MCF 10A (cell line): ENCODE measurements at regions of chrX and their contacts with region 1.

Region 1: GRCh38 chrX:9464435-9465371 is at the start of gene TBL1X:
- DNase-seq: no peak
- H3K4me3 Mint-ChIP-seq: peak within 1 kb of the TSS; percentile 57
- H3K27ac Mint-ChIP-seq: no peak within 1 kb of the TSS
- H3K4me1 Mint-ChIP-seq: peaks cover 14% of the 10 kb centered on the region
- H3K27me3 Mint-ChIP-seq: no peaks in the 10 kb centered on the region
- CTCF ChIP-seq: no peak
- total RNA-seq, gene TBL1X: 15.0 and 21.7 TPM in 2 replicates

Region 2: GRCh38 chrX:8971116-8971515 is 493.6 kb before region 1 on chrX:
- CTCF ChIA-PET with region 1: no interaction called
- POLR2A ChIA-PET with region 1: no interaction called
- intact Hi-C with region 1: loop called (anchors 2 kb)
- DNase-seq: peak; percentile 67
- H3K4me3 Mint-ChIP-seq: no peak overlapping the region
- H3K27ac Mint-ChIP-seq: no peak overlapping the region
- H3K4me1 Mint-ChIP-seq: no peaks in the 10 kb centered on the region
- H3K27me3 Mint-ChIP-seq: no peaks in the 10 kb centered on the region
- CTCF ChIP-seq: peak; percentile 31

Region 3: DNA sequence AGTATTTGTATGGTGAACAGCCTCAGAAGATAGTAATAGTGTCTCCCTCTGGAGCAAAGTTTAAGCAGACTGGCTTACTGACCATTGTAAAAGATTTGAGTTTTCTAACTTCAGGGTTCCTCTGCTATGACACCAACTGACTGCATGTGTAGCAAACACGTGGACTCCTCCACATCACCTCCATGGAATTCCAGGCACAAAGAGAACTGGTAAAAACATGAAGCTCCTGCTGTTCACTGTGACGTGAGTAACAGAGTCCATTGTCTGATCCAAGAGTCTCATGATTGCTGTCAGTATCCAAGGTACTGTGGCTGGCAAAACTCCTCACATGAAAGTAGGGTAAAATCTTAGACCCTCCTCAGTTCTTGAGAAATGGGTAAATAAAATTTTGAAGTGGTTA is 323.2 kb before region 1 on chrX:
- CTCF ChIA-PET with region 1: no interaction called
- POLR2A ChIA-PET with region 1: no interaction called
- intact Hi-C with region 1: no loop called
- DNase-seq: peak; percentile 21
- H3K4me3 Mint-ChIP-seq: no peak overlapping the region
- H3K27ac Mint-ChIP-seq: peak overlapping the region; percentile 23
- H3K4me1 Mint-ChIP-seq: peaks cover 13% of the 10 kb centered on the region
- H3K27me3 Mint-ChIP-seq: no peaks in the 10 kb centered on the region
- CTCF ChIP-seq: no peak

Region 4: GRCh38 chrX:9163214-9163681 is 301.5 kb before region 1 on chrX:
- CTCF ChIA-PET with region 1: no interaction called
- POLR2A ChIA-PET with region 1: interaction called, 3 read pairs
- intact Hi-C with region 1: loop called (anchors 1 kb)
- DNase-seq: peak; percentile 49
- H3K4me3 Mint-ChIP-seq: peak overlapping the region; percentile 64
- H3K27ac Mint-ChIP-seq: peak overlapping the region; percentile 44
- H3K4me1 Mint-ChIP-seq: peaks cover 10% of the 10 kb centered on the region
- H3K27me3 Mint-ChIP-seq: no peaks in the 10 kb centered on the region
- CTCF ChIP-seq: no peak

Region 5: GRCh38 chrX:9341291-9342201 is 123.2 kb before region 1 on chrX:
- CTCF ChIA-PET with region 1: no interaction called
- POLR2A ChIA-PET with region 1: interaction called, 4 read pairs
- intact Hi-C with region 1: loop called (anchors 1 kb)
- DNase-seq: peak; percentile 56
- H3K4me3 Mint-ChIP-seq: peak overlapping the region; percentile 43
- H3K27ac Mint-ChIP-seq: no peak overlapping the region
- H3K4me1 Mint-ChIP-seq: peaks cover 5% of the 10 kb centered on the region
- H3K27me3 Mint-ChIP-seq: no peaks in the 10 kb centered on the region
- CTCF ChIP-seq: no peak